Stomach (tissue), 19 donors: ENCODE measurements at regions of chr12 and their contacts with region 1.

Region 1: GRCh38 chr12:110613771-110614684 is at the start of gene TCTN1:
- DNase-seq: peak; percentile 95 to 99
- H3K4me3 ChIP-seq: peak within 1 kb of the TSS; percentile 66 to 85 (median 74)
- H3K27ac ChIP-seq: peak within 1 kb of the TSS; percentile 44 to 82 (median 74)
- H3K4me1 ChIP-seq: peaks cover 0 to 16% (median 12%) of the 10 kb centered on the region in 4 donors
- H3K27me3 ChIP-seq: no peaks in the 10 kb centered on the region
- CTCF ChIP-seq: no peak
- EP300 ChIP-seq: no peak
- POLR2A ChIP-seq: no peak
- total RNA-seq, gene TCTN1: 5.3 to 60.0 (median 17.1) TPM

Region 2: DNA sequence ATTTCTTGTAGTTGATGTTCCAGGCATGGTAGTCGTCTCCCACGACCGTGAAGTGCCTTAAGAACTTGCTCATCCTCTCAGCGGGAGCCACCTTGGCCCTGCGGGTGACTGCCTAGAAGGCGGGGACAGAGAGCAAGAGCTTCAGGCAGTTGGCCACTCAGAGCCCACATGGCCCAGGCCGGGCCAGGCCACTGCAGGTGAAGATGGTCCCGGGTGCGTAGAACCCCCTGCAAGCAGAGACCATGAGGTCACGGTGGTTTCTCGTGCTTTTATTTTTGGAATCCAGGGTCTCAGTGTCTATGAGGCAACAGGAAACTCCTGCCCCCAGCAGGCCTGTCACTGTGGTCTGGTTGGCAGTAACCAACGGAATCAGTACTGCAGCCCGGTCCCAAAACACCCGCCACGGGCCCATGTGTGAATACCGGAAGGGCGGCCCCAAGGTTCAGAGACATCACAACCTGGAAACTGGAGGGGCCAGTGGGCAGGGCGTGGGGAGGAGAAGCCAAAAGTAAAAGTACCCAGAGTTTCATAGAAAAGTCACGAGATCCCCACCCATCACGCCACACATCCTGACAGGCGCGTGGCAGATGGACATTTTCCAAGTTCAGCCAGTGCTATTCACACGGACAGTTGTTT is 47.4 kb after region 1 on chr12:
- intact Hi-C with region 1: no loop called
- DNase-seq: peak; percentile 27 to 52
- H3K4me3 ChIP-seq: peak overlapping the region in 1 of 4 donors; percentile 10
- H3K27ac ChIP-seq: peak overlapping the region in 1 of 5 donors; percentile 27
- H3K4me1 ChIP-seq: peaks cover 0 to 5% (median 0%) of the 10 kb centered on the region in 4 donors
- H3K27me3 ChIP-seq: no peaks in the 10 kb centered on the region
- CTCF ChIP-seq: no peak
- EP300 ChIP-seq: no peak
- POLR2A ChIP-seq: no peak

Region 3: DNA sequence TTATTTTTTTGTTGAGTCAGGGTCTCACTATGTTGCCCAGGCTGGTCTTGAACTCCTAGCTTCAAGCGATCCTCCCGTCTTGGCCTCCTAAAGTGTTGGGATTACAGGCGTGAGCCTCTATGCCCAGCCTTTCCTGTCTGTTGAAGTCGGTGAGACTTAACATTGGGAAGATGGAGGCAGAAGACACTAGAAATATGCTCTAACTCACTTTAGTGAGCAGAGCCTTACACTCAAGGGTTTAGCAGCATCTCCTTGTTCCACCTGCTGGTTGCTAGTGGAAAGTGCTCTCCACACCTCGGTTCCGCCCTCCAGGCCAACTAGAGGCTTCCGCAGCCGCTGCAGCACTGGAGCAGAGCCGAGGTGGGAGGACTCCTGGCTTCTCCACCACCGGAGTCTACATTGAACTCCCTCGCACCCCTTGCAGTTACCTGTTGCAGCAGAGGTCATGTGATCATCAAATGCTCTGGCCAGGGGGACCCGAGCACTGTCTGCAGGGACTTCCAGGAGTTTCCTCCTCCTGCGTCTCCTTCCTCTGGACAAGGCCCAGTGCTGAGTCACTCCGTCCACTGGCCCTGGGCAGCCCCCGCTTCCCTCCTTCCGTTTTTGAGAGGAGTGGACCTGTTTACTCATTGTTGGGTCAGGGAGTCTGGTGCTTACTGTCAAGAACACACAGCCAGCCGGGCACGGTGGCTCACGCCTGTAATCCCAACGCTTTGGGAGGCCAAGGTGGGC is 84.3 kb after region 1 on chr12:
- intact Hi-C with region 1: loop called (anchors 10 kb)
- DNase-seq: peak; percentile 81 to 92
- H3K4me3 ChIP-seq: peak overlapping the region; percentile 15 to 32 (median 22)
- H3K27ac ChIP-seq: peak overlapping the region; percentile 7 to 73 (median 53)
- H3K4me1 ChIP-seq: peaks cover 6 to 37% (median 14%) of the 10 kb centered on the region in 4 donors
- H3K27me3 ChIP-seq: no peaks in the 10 kb centered on the region
- CTCF ChIP-seq: peak in 5 of 7 experiments; percentile 54 to 79 (median 68)
- EP300 ChIP-seq: no peak
- POLR2A ChIP-seq: no peak